ENCODE measurements at regions of chr14 and their contacts with region 1.

Region 1: GRCh38 chr14:81164167-81164774 is 56.5 kb downstream of the GTF2A1 start:
- DNase-seq: peak; percentile 33 to 82 (median 49)
- ATAC-seq: peak; percentile 96
- H3K4me3 ChIP-seq: no peak overlapping the region
- H3K27ac ChIP-seq: peak overlapping the region; percentile 23; the same call in 2 of the 3 replicates
- H3K4me1 ChIP-seq: peaks cover 0 to 22% of the 10 kb centered on the region in 2 experiments; a peak in 3 of 5 replicates
- H3K27me3 ChIP-seq: no peaks in the 10 kb centered on the region
- CTCF ChIP-seq: peak; percentile 72 to 75 (median 75)
- EP300 ChIP-seq: no peak
- POLR2A ChIP-seq: no peak
- RAD21 ChIP-seq: peak; percentile 58 to 79

Region 2: GRCh38 chr14:81062816-81063215 is 101.5 kb before region 1 on chr14:
- CTCF ChIA-PET with region 1: no interaction called
- POLR2A ChIA-PET with region 1: no interaction called
- in situ Hi-C with region 1: no loop called
- intact Hi-C with region 1: loop called (anchors 1 kb)
- DNase-seq: peak; percentile 5 to 38 (median 19)
- ATAC-seq: peak; percentile 90
- H3K4me3 ChIP-seq: no peak overlapping the region
- H3K27ac ChIP-seq: no peak overlapping the region
- H3K4me1 ChIP-seq: no peaks in the 10 kb centered on the region
- H3K27me3 ChIP-seq: no peaks in the 10 kb centered on the region; a peak in 1 of 5 replicates
- CTCF ChIP-seq: peak; percentile 46 to 60 (median 57)
- EP300 ChIP-seq: no peak
- POLR2A ChIP-seq: no peak
- RAD21 ChIP-seq: peak; percentile 55 to 73

Measured in K562 (cell line).